Activated naive CD4-positive, alpha-beta T cell treated with anti-CD3 and anti-CD28 coated beads, Interleukin-2, amount 10 ng/mL, durations not matched to agents 7 days and 5 days (primary cell): ENCODE measurements at regions of chr5 and their contacts with region 1.

Region 1: GRCh38 chr5:52948418-52949076 is 40.6 kb upstream of the ITGA2 start:
- DNase-seq: peak; percentile 81
- H3K4me3 Mint-ChIP-seq: no peak overlapping the region
- H3K27ac Mint-ChIP-seq: no peak overlapping the region
- H3K4me1 Mint-ChIP-seq: peaks cover 24% of the 10 kb centered on the region
- H3K27me3 Mint-ChIP-seq: peaks cover 7% of the 10 kb centered on the region

Region 2: GRCh38 chr5:52743970-52744369 is 204.6 kb before region 1 on chr5:
- CTCF ChIA-PET with region 1: no interaction called
- DNase-seq: peak; percentile 41
- H3K4me3 Mint-ChIP-seq: no peak overlapping the region
- H3K27ac Mint-ChIP-seq: peak overlapping the region; percentile 75
- H3K4me1 Mint-ChIP-seq: peaks cover 52% of the 10 kb centered on the region
- H3K27me3 Mint-ChIP-seq: peaks cover 4% of the 10 kb centered on the region

Region 3: DNA sequence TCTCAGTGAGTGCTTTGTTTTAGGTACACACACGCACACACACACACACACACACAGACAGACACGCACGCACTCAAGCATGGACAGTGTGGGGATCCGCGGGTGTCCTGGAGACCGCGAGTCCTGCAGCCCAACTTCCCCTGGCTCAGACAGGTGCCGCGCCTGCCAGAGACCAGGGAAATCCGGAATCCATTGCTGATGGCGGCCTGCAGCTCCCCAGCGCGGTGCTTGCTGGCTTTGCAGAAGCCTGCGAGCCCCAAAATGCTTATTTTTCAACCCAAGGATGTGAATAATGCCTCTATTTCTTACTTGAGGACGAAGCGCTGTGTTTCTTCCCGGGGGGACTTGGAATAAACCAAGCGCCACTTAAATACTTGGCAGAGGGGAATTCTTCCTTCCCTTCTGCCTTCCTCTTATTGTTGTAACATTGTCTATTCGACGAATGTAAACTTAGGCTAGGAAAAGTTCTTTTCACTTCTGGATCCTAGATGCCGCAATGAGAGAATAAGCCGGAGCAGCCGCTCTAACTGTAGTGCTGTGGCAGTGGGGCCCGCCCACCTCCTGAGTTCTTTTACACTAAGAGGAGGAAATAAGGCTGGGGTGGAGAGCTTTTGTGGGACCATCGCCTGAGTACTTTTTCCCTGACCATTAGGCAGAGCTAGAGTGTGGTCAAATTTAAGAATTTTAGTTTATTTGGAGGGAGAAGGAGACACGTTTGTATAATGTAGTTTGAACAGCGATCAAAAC is 41.4 kb after region 1 on chr5:
- CTCF ChIA-PET with region 1: interaction called, 45 read pairs
- DNase-seq: peak; percentile 68
- H3K4me3 Mint-ChIP-seq: peak overlapping the region; percentile 80
- H3K27ac Mint-ChIP-seq: peak overlapping the region; percentile 0
- H3K4me1 Mint-ChIP-seq: peaks cover 38% of the 10 kb centered on the region
- H3K27me3 Mint-ChIP-seq: peaks cover 22% of the 10 kb centered on the region

Region 4: GRCh38 chr5:53041071-53041692 is 92.6 kb after region 1 on chr5:
- CTCF ChIA-PET with region 1: interaction called, 18 read pairs
- DNase-seq: peak; percentile 52
- H3K4me3 Mint-ChIP-seq: peak overlapping the region; percentile 59
- H3K27ac Mint-ChIP-seq: peak overlapping the region; percentile 95
- H3K4me1 Mint-ChIP-seq: peaks cover 76% of the 10 kb centered on the region
- H3K27me3 Mint-ChIP-seq: no peaks in the 10 kb centered on the region

Region 5: GRCh38 chr5:53069626-53070025 is 121.1 kb after region 1 on chr5:
- CTCF ChIA-PET with region 1: interaction called, 16 read pairs
- DNase-seq: peak; percentile 72
- H3K4me3 Mint-ChIP-seq: no peak overlapping the region
- H3K27ac Mint-ChIP-seq: peak overlapping the region; percentile 46
- H3K4me1 Mint-ChIP-seq: peaks cover 27% of the 10 kb centered on the region
- H3K27me3 Mint-ChIP-seq: no peaks in the 10 kb centered on the region

Region 6: DNA sequence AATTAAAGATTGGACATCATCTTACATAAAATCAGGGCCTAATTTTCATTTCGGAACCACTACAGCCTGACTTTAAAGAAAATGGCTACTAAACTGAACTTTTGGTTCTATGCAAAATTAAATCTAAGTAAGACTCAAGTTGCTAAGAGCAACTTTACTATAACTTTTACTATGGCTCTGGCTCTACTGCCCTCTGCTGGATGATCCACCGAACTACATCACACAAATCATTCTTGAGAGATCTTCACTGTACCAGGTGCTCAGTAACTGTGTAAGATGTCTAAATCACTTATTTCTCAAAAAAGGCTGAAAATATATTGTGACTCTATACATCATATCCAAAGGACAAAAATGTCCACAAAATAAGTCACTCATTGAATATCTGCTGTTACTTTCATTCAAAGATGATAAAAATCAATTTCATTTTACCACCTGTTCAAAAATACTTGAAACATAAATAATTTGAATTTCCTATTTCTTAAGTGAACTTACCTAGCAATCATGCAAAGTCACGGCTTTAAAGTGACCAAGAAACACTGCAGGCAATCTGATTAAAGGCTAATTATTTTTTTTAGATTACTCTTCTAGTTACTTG is 147.5 kb after region 1 on chr5:
- CTCF ChIA-PET with region 1: interaction called, 178 read pairs
- DNase-seq: peak; percentile 82
- H3K4me3 Mint-ChIP-seq: no peak overlapping the region
- H3K27ac Mint-ChIP-seq: no peak overlapping the region
- H3K4me1 Mint-ChIP-seq: peaks cover 19% of the 10 kb centered on the region
- H3K27me3 Mint-ChIP-seq: no peaks in the 10 kb centered on the region

Region 7: DNA sequence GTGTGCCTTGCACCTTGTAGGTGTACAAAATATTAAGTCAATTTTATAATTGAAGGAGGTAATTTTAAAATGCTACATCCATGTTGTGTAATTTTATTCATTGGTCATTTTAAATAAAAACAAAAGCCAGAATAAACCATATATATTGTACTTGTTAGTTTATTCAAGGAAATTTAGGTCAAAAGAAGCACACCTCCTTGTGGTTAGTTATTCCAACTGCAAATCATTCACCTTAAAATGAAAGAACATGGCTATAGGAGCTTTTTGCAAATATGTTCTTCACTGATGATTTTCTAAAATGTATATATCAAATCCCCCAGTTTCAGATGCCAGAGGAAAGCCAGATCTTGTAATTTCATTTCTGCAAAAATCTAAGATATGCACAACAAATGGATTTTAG is 166.4 kb after region 1 on chr5:
- CTCF ChIA-PET with region 1: interaction called, 34 read pairs
- DNase-seq: no peak
- H3K4me3 Mint-ChIP-seq: no peak overlapping the region
- H3K27ac Mint-ChIP-seq: no peak overlapping the region
- H3K4me1 Mint-ChIP-seq: peaks cover 13% of the 10 kb centered on the region
- H3K27me3 Mint-ChIP-seq: peaks cover 5% of the 10 kb centered on the region